HEK293 (cell line): ENCODE measurements at regions of chr2 and their contacts with region 1.

Region 1: GRCh38 chr2:134207564-134208209 is 46.2 kb upstream of the MGAT5 start:
- H3K4me3 ChIP-seq: no peak overlapping the region
- H3K27ac ChIP-seq: no peak overlapping the region
- H3K4me1 ChIP-seq: peaks cover 12% of the 10 kb centered on the region
- CTCF ChIP-seq: peak; percentile 57

Region 2: GRCh38 chr2:133886735-133887660 is 320.7 kb before region 1 on chr2:
- CTCF ChIA-PET with region 1: interaction called, 12 read pairs
- POLR2A ChIA-PET with region 1: no interaction called
- H3K4me3 ChIP-seq: no peak overlapping the region
- H3K27ac ChIP-seq: no peak overlapping the region
- H3K4me1 ChIP-seq: no peaks in the 10 kb centered on the region; the same call in 1 of the 2 replicates
- CTCF ChIP-seq: peak; percentile 43; the same call in 1 of the 2 replicates

Region 3: DNA sequence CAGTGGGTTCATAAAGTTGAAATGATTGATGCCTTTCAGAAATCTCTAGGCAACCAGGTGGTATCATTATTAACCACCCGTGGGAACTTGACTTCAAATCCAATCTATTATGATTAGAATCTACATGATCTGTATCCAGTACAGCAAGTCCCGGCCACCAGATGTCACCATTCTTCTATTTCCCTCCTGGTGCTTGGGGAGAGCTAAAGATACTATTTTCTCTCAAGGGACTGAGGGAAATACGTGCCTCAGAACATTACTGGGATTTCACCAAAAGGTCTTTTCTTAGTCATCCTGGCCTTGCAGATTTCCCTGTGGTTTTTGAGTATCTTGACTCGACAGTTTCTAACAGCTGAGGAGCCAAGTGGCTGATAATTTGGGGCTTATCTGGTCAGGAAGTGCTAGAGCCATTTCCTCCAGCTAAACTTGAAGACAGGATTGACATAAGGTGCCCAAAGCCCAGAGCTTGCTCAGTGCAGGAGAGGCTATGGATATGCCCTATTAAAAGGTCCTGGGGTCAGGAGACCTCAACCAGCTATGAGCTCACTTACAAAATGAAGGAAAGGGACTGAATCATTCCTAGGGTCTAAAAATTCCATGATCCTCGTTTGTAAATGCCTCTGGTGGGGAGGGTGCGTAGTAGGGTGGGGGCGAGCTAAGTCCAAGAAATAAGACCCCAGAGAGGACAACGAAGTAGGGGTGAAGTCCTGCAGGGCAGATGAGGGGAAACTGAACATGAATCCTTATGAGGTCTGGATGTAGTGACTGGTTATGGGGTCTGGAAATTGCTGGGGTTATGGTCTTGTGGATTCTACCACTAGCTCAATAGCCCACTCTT is 89.2 kb before region 1 on chr2:
- CTCF ChIA-PET with region 1: interaction called, 69 read pairs
- POLR2A ChIA-PET with region 1: interaction called, 8 read pairs
- H3K4me3 ChIP-seq: no peak overlapping the region
- H3K27ac ChIP-seq: no peak overlapping the region
- H3K4me1 ChIP-seq: peaks cover 13% of the 10 kb centered on the region
- CTCF ChIP-seq: peak; percentile 40; the same call in 1 of the 2 replicates

Region 4: DNA sequence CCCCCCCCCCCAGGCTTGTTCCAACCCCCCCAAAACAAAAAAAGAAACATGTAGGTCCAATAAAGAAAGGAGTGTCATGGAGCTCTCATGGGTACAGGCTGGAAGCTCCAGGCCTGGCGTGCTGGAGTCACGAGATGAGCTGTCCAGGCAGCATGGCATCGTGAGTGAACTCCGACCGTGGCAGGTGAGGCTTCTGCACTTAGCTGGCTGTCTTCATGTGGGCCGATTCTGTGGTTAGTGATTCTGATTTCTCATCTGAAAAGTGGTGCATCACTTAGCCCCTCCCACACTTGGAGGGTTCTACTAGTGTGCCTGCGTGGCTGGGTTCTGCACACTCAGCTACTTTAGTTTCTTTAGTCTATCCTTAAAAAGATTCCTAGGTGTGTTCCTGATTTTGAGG is 80.2 kb before region 1 on chr2:
- CTCF ChIA-PET with region 1: interaction called, 21 read pairs
- POLR2A ChIA-PET with region 1: no interaction called
- H3K4me3 ChIP-seq: no peak overlapping the region
- H3K27ac ChIP-seq: no peak overlapping the region
- H3K4me1 ChIP-seq: peaks cover 23% of the 10 kb centered on the region
- CTCF ChIP-seq: no peak

Region 5: GRCh38 chr2:134218930-134219658 is 11.4 kb after region 1 on chr2:
- CTCF ChIA-PET with region 1: interaction called, 15 read pairs
- POLR2A ChIA-PET with region 1: no interaction called
- H3K4me3 ChIP-seq: no peak overlapping the region
- H3K27ac ChIP-seq: no peak overlapping the region
- H3K4me1 ChIP-seq: no peaks in the 10 kb centered on the region
- CTCF ChIP-seq: no peak

Region 6: GRCh38 chr2:134359367-134360081 is 151.8 kb after region 1 on chr2:
- CTCF ChIA-PET with region 1: no interaction called
- POLR2A ChIA-PET with region 1: no interaction called
- H3K4me3 ChIP-seq: no peak overlapping the region
- H3K27ac ChIP-seq: no peak overlapping the region
- H3K4me1 ChIP-seq: peaks cover 18% of the 10 kb centered on the region
- CTCF ChIP-seq: no peak

Region 7: DNA sequence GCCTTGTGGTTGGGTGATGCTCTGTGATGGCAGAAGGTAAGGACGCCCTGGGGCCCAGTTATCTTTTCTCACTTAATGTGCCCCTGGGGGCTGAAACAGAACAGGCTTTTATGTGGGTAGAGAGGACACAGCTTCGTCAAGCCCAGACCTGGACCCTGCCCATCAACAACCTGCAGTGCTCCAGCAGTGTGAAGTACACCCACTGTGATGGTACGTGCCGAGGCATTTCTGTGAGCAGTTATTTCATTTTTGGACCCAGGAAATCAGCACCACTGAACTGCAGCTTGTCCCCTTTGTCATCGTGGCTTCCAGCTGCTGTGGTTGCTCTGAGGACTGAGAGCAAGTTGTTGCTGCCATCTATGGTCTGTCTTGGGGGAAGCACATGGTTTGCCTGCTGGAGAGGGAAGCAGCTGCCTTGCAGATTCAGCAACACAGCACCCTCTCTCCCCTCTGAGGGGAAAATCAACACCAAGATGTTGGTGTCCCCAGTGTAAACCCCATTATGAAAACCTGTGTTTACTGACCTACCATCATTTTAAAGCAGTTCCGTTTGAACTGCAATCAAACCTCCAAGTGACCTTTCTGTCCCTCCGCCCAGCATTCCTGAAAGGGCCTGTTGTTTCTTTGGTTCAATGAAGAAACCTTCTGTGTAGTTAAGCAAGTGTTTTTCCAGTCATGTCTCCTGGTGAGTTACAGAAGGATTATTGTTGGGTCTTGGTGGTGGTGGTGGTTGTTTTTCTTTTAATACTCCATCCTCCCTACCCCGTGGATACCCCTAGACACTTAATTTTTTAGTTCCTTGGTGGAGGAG is 204.3 kb after region 1 on chr2:
- CTCF ChIA-PET with region 1: interaction called, 10 read pairs
- POLR2A ChIA-PET with region 1: no interaction called
- H3K4me3 ChIP-seq: no peak overlapping the region
- H3K27ac ChIP-seq: no peak overlapping the region
- H3K4me1 ChIP-seq: peaks cover 13% of the 10 kb centered on the region
- CTCF ChIP-seq: peak; percentile 83